Caco-2 (cell line): ENCODE measurements at regions of chr15 and their contacts with region 1.

Region 1: GRCh38 chr15:71800835-71801745 is 9.3 kb upstream of the NR2E3 start:
- DNase-seq: peak in 1 of 2 experiments; percentile 72
- H3K4me3 ChIP-seq: no peak overlapping the region
- H3K4me3 Mint-ChIP-seq: no peak overlapping the region
- H3K27ac Mint-ChIP-seq: no peak overlapping the region
- H3K4me1 ChIP-seq: no peaks in the 10 kb centered on the region
- H3K4me1 Mint-ChIP-seq: no peaks in the 10 kb centered on the region
- H3K27me3 ChIP-seq: no peaks in the 10 kb centered on the region
- H3K27me3 Mint-ChIP-seq: no peaks in the 10 kb centered on the region
- CTCF ChIP-seq: peak; percentile 80 to 91

Region 2: GRCh38 chr15:71114896-71115554 is 686.1 kb before region 1 on chr15 and contains the start of gene THSD4:
- CTCF ChIA-PET with region 1: no interaction called
- POLR2A ChIA-PET with region 1: no interaction called
- intact Hi-C with region 1: loop called (anchors 10 kb)
- DNase-seq: peak; percentile 68 to 83
- H3K4me3 ChIP-seq: peak within 1 kb of the TSS; percentile 38
- H3K4me3 Mint-ChIP-seq: peak within 1 kb of the TSS; percentile 74
- H3K27ac Mint-ChIP-seq: no peak within 1 kb of the TSS
- H3K4me1 ChIP-seq: no peaks in the 10 kb centered on the region; the same call in 1 of the 2 replicates
- H3K4me1 Mint-ChIP-seq: peaks cover 9% of the 10 kb centered on the region
- H3K27me3 ChIP-seq: peaks cover 1% of the 10 kb centered on the region; the same call in 1 of the 2 replicates
- H3K27me3 Mint-ChIP-seq: peaks cover 19% of the 10 kb centered on the region
- CTCF ChIP-seq: peak; percentile 90 to 98
- total RNA-seq, gene THSD4: 0.29 and 0.44 TPM in 2 replicates

Region 3: GRCh38 chr15:71386448-71387236 is 414.4 kb before region 1 on chr15:
- CTCF ChIA-PET with region 1: no interaction called
- POLR2A ChIA-PET with region 1: no interaction called
- intact Hi-C with region 1: loop called (anchors 2 kb)
- DNase-seq: peak in 1 of 2 experiments; percentile 9
- H3K4me3 ChIP-seq: no peak overlapping the region
- H3K4me3 Mint-ChIP-seq: no peak overlapping the region
- H3K27ac Mint-ChIP-seq: no peak overlapping the region
- H3K4me1 ChIP-seq: no peaks in the 10 kb centered on the region
- H3K4me1 Mint-ChIP-seq: peaks cover 7% of the 10 kb centered on the region
- H3K27me3 ChIP-seq: no peaks in the 10 kb centered on the region
- H3K27me3 Mint-ChIP-seq: peaks cover 3% of the 10 kb centered on the region
- CTCF ChIP-seq: peak; percentile 12 to 33

Region 4: DNA sequence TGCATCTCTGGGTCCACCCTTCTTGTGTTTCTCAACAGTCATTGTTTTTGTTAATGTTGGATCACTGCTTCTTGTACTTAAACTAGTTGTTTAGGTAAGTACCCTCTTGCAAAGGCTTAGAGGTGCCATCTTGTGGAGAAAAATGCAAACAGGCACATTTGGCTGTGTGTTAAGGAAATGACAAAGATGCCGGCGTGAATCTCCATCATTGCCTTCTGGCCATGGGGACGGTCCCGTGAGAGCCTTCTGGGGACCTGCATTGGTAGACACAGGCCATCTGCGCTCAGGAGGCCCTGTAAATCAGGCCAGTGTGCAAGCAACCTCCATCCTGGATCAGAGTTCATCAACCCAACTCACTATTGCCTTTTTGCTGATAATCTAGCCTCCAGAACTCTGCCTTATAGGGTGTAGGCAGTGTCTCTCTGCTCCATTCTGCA is 149.3 kb before region 1 on chr15:
- CTCF ChIA-PET with region 1: no interaction called
- POLR2A ChIA-PET with region 1: no interaction called
- intact Hi-C with region 1: loop called (anchors 1 kb)
- DNase-seq: peak; percentile 59 to 63
- H3K4me3 ChIP-seq: no peak overlapping the region
- H3K4me3 Mint-ChIP-seq: no peak overlapping the region
- H3K27ac Mint-ChIP-seq: no peak overlapping the region
- H3K4me1 ChIP-seq: peaks cover 9% of the 10 kb centered on the region
- H3K4me1 Mint-ChIP-seq: peaks cover 6% of the 10 kb centered on the region
- H3K27me3 ChIP-seq: no peaks in the 10 kb centered on the region
- H3K27me3 Mint-ChIP-seq: no peaks in the 10 kb centered on the region
- CTCF ChIP-seq: peak; percentile 63 to 64

Region 5: DNA sequence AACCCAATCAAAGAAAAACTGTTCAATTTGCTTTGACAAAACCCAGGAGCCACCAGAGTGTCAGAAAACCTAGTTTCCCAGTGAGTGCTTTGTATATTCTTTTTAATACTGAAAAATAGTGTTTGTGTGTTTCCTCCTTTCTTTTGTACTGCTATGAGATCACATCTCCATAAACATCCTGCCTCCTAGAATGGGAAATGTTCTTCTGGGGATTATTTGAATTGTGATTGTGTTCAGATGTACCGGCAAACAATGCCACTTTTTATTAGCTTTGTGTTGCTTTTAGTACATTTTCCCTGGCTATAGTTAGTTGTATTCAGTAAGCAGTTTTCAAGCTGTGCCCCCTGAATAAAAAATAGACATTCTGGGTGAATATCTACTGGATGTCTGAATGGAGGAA is 138.8 kb before region 1 on chr15:
- CTCF ChIA-PET with region 1: no interaction called
- POLR2A ChIA-PET with region 1: no interaction called
- intact Hi-C with region 1: no loop called
- DNase-seq: no peak
- H3K4me3 ChIP-seq: no peak overlapping the region
- H3K4me3 Mint-ChIP-seq: no peak overlapping the region
- H3K27ac Mint-ChIP-seq: peak overlapping the region; percentile 60
- H3K4me1 ChIP-seq: peaks cover 38% of the 10 kb centered on the region
- H3K4me1 Mint-ChIP-seq: peaks cover 32% of the 10 kb centered on the region
- H3K27me3 ChIP-seq: no peaks in the 10 kb centered on the region
- H3K27me3 Mint-ChIP-seq: no peaks in the 10 kb centered on the region
- CTCF ChIP-seq: no peak

Region 6: DNA sequence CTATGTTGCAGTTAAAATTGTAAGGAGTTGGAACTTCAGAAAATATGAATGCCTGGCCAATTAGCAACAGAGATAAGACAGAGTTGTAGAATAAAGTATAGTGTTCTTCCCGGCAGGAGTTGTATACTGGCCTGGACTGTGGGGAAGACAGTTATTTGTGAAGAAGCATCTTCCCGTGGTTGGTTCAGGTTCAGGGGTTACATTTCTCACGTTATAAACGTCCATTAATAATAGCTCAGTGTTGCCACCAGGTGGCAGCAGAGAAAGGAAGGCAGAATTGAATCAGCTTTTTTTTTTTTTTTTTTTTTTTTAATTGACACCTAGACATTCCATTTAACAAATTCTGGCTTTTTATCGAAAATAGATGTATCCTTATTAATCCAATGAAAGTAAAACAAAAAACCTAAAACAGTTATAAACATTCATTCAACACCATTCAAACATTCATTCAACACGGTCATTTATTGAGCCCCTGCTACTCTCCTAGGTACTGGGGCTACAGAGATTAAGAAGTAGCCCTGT is 57.2 kb before region 1 on chr15:
- CTCF ChIA-PET with region 1: interaction called, 9 read pairs
- POLR2A ChIA-PET with region 1: no interaction called
- intact Hi-C with region 1: loop called (anchors 1 kb)
- DNase-seq: peak; percentile 55 to 68
- H3K4me3 ChIP-seq: no peak overlapping the region
- H3K4me3 Mint-ChIP-seq: no peak overlapping the region
- H3K27ac Mint-ChIP-seq: no peak overlapping the region
- H3K4me1 ChIP-seq: peaks cover 47% of the 10 kb centered on the region
- H3K4me1 Mint-ChIP-seq: peaks cover 44% of the 10 kb centered on the region
- H3K27me3 ChIP-seq: no peaks in the 10 kb centered on the region
- H3K27me3 Mint-ChIP-seq: no peaks in the 10 kb centered on the region
- CTCF ChIP-seq: peak; percentile 59 to 63

Region 7: DNA sequence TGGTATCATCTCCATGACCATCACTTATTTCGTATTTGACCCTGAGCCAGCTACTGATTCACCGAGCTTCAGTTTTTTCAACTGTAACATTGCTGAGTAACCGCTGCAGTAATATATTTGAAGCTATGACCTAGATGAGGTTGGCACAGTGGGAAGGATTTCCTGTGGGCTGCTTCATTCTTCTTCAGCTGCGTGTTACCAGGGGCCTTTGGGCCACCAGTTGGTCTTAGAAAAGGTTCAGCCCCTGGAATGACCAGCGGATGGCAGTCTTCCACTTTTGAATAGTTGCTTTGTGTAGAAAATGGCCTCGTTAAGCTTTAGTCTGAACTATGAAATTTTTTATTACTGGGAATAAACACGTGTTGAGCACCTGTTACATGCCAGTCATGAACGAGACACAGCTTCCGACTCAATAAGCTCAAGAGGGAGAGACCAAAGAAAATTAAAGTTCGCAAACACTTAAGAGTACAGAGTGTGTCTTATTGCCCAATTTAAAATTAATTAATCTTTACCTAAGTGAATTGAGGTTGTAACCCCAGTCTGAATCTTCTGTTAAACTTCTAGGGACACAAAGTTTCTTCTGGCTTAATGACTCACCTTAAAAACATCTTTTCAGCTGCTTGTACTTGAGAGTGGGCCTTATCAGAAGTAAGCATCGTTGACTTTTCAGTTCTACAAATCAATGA is 48.3 kb before region 1 on chr15:
- CTCF ChIA-PET with region 1: interaction called, 4 read pairs
- POLR2A ChIA-PET with region 1: no interaction called
- intact Hi-C with region 1: loop called (anchors 2 kb)
- DNase-seq: peak; percentile 47 to 61
- H3K4me3 ChIP-seq: no peak overlapping the region
- H3K4me3 Mint-ChIP-seq: no peak overlapping the region
- H3K27ac Mint-ChIP-seq: no peak overlapping the region
- H3K4me1 ChIP-seq: peaks cover 24% of the 10 kb centered on the region
- H3K4me1 Mint-ChIP-seq: peaks cover 14% of the 10 kb centered on the region
- H3K27me3 ChIP-seq: no peaks in the 10 kb centered on the region
- H3K27me3 Mint-ChIP-seq: no peaks in the 10 kb centered on the region
- CTCF ChIP-seq: peak; percentile 45 to 64